ENCODE measurements at regions of chr3 and their contacts with region 1.

Region 1: GRCh38 chr3:3200632-3201212 is 21.2 kb upstream of the CRBN start:
- DNase-seq: peak; percentile 48
- H3K4me3 ChIP-seq: no peak overlapping the region
- H3K27ac ChIP-seq: no peak overlapping the region
- H3K4me1 ChIP-seq: no peaks in the 10 kb centered on the region
- H3K27me3 ChIP-seq: no peaks in the 10 kb centered on the region
- CTCF ChIP-seq: peak; percentile 49 to 59
- POLR2A ChIP-seq: no peak

Region 2: GRCh38 chr3:3998140-3998922 is 797.6 kb after region 1 on chr3:
- CTCF ChIA-PET with region 1: interaction called, 10 read pairs
- POLR2A ChIA-PET with region 1: no interaction called
- dilution Hi-C with region 1: no loop called
- intact Hi-C with region 1: no loop called
- DNase-seq: peak; percentile 2
- H3K4me3 ChIP-seq: no peak overlapping the region
- H3K27ac ChIP-seq: no peak overlapping the region
- H3K4me1 ChIP-seq: no peaks in the 10 kb centered on the region
- H3K27me3 ChIP-seq: no peaks in the 10 kb centered on the region
- CTCF ChIP-seq: no peak
- POLR2A ChIP-seq: no peak

Region 3: DNA sequence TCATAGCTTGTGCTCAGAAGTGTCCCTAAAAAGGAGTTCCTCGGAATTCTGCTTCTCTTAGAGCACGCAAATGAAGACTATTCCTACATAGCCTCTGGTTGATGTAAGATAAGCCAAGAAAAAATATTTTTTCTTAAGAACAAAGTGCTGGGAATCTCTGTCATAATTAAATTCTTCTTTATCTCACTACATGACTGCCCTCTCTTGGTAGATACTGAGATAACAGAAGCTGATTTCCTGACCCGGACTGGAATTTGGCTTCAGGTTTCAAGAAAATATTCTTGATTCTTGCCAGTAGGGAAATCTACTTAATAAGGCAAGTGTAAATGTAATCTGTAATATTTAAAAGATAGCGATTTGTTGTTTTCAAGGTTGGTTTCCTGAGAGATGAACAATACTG is 1071.1 kb after region 1 on chr3:
- CTCF ChIA-PET with region 1: interaction called, 60 read pairs
- POLR2A ChIA-PET with region 1: no interaction called
- dilution Hi-C with region 1: no loop called
- intact Hi-C with region 1: loop called (anchors 1 kb)
- DNase-seq: peak; percentile 35
- H3K4me3 ChIP-seq: no peak overlapping the region
- H3K27ac ChIP-seq: no peak overlapping the region
- H3K4me1 ChIP-seq: no peaks in the 10 kb centered on the region
- H3K27me3 ChIP-seq: peaks cover 0 to 3% of the 10 kb centered on the region in 2 experiments
- CTCF ChIP-seq: peak in 1 of 2 donors; percentile 25
- POLR2A ChIP-seq: no peak

Region 4: GRCh38 chr3:4290272-4290893 is 1089.7 kb after region 1 on chr3:
- CTCF ChIA-PET with region 1: interaction called, 213 read pairs
- POLR2A ChIA-PET with region 1: no interaction called
- dilution Hi-C with region 1: no loop called
- intact Hi-C with region 1: loop called (anchors 1 kb)
- DNase-seq: peak; percentile 58
- H3K4me3 ChIP-seq: no peak overlapping the region
- H3K27ac ChIP-seq: no peak overlapping the region
- H3K4me1 ChIP-seq: no peaks in the 10 kb centered on the region
- H3K27me3 ChIP-seq: peaks cover 2 to 8% of the 10 kb centered on the region in 2 experiments
- CTCF ChIP-seq: peak; percentile 66 to 72
- POLR2A ChIP-seq: no peak

Region 5: GRCh38 chr3:4297486-4297885 is 1096.8 kb after region 1 on chr3:
- CTCF ChIA-PET with region 1: interaction called, 213 read pairs
- POLR2A ChIA-PET with region 1: no interaction called
- dilution Hi-C with region 1: no loop called
- intact Hi-C with region 1: no loop called
- DNase-seq: no peak
- H3K4me3 ChIP-seq: no peak overlapping the region
- H3K27ac ChIP-seq: no peak overlapping the region
- H3K4me1 ChIP-seq: no peaks in the 10 kb centered on the region
- H3K27me3 ChIP-seq: no peaks in the 10 kb centered on the region
- CTCF ChIP-seq: no peak
- POLR2A ChIP-seq: no peak

Measured in endothelial cell of umbilical vein (primary cell).